ENCODE measurements at regions of chrX and their contacts with region 1.

Region 1: DNA sequence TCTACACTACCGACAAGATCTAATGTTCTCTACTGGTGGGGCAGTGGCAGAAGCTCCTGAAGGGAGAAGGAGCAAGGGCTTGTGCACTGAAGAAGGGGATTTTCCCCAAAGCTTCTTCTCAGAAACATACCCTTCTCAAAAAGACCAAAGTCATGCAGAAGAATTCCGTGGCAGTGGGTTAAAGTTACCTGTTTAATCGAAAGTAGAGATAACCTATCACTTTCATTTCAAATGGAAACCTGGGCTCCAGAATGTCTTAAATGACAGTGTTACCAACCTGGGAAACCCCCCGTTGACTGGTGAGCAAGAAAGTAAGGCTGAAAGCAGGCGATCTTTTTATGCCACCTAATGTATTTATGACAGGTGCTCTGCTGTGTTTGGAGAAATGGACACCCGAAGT is 92.5 kb upstream of the TEX13D start:
- DNase-seq: peak; percentile 34
- H3K4me3 Mint-ChIP-seq: peak overlapping the region; percentile 59
- H3K27ac Mint-ChIP-seq: peak overlapping the region; percentile 87
- H3K4me1 Mint-ChIP-seq: peaks cover 45% of the 10 kb centered on the region
- H3K27me3 Mint-ChIP-seq: peaks cover 4% of the 10 kb centered on the region

Region 2: GRCh38 chrX:124113799-124114600 is 125.9 kb before region 1 on chrX:
- intact Hi-C with region 1: no loop called
- DNase-seq: no peak
- H3K4me3 Mint-ChIP-seq: no peak overlapping the region
- H3K27ac Mint-ChIP-seq: no peak overlapping the region
- H3K4me1 Mint-ChIP-seq: no peaks in the 10 kb centered on the region
- H3K27me3 Mint-ChIP-seq: no peaks in the 10 kb centered on the region

Region 3: DNA sequence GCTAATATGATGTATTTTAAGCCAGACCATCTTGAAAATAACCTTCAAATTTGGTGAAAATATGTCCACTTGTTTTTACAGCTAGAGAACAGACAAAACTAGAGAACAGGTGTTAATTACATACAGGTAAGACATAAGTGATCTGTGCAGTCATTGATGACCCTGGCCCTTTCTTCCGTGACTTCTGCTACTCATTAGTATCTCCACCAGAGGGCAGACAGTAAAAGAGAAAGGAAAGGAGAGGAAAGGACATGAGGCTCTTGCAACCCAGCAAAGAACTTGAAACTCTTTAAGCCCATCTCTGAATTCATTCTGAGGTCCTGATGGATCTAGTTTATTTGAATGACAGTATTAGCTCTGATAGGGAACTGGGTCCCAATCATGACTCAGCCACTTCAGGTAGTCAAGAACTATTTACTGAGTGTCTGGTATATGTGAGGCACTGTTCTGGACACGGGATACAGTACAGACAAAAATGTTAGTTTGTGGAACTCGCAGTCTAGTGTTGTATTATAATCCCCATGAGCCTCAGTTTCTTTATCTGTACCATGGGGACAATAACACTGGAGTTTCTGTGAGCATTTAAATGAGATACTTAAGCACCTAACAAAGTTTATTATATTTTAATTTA is 28.5 kb before region 1 on chrX:
- intact Hi-C with region 1: loop called (anchors 1 kb)
- DNase-seq: peak; percentile 3
- H3K4me3 Mint-ChIP-seq: no peak overlapping the region
- H3K27ac Mint-ChIP-seq: no peak overlapping the region
- H3K4me1 Mint-ChIP-seq: peaks cover 44% of the 10 kb centered on the region
- H3K27me3 Mint-ChIP-seq: peaks cover 5% of the 10 kb centered on the region

Region 4: GRCh38 chrX:124217304-124218251 is 22.3 kb before region 1 on chrX:
- intact Hi-C with region 1: loop called (anchors 1 kb)
- DNase-seq: peak; percentile 56
- H3K4me3 Mint-ChIP-seq: peak overlapping the region; percentile 79
- H3K27ac Mint-ChIP-seq: peak overlapping the region; percentile 93
- H3K4me1 Mint-ChIP-seq: peaks cover 76% of the 10 kb centered on the region
- H3K27me3 Mint-ChIP-seq: peaks cover 2% of the 10 kb centered on the region

Region 5: DNA sequence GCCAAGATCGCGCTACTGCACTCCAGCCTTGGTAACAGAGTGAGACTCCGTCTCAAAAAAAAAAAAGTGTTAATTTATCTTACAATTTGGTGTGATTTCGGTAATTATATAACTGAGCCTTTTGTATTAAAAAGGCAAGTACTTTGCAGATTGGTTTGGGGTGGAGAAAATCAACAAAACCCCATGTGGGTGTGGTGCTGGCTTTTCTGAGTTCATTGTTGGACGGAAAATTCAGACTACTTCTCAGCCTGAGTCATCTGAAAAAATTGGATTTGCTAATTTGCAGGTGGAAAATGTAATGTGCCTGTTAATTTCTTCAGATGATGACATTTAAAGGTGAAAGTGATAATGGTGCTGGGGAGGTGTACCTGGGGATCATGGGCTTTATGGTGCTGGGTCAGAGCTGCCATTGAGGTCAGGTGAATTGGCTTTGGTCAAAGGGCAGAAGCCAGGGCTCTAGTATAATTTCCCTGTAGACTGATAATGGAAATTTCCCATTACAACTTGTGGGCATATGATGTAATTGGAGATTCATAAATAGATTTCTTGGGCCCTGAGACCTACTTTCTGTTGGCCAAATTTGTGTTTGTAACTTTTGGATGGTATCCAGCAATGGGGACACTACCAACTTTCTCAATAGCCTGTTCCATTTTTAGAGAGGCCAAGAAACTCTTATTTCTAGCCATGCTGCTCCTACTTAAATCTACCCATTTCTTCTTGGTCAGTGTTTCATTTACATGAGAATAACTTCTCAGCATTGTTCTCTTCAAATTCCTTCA is 18.2 kb after region 1 on chrX:
- intact Hi-C with region 1: loop called (anchors 1 kb)
- DNase-seq: no peak
- H3K4me3 Mint-ChIP-seq: no peak overlapping the region
- H3K27ac Mint-ChIP-seq: peak overlapping the region; percentile 27
- H3K4me1 Mint-ChIP-seq: peaks cover 13% of the 10 kb centered on the region
- H3K27me3 Mint-ChIP-seq: no peaks in the 10 kb centered on the region

Region 6: DNA sequence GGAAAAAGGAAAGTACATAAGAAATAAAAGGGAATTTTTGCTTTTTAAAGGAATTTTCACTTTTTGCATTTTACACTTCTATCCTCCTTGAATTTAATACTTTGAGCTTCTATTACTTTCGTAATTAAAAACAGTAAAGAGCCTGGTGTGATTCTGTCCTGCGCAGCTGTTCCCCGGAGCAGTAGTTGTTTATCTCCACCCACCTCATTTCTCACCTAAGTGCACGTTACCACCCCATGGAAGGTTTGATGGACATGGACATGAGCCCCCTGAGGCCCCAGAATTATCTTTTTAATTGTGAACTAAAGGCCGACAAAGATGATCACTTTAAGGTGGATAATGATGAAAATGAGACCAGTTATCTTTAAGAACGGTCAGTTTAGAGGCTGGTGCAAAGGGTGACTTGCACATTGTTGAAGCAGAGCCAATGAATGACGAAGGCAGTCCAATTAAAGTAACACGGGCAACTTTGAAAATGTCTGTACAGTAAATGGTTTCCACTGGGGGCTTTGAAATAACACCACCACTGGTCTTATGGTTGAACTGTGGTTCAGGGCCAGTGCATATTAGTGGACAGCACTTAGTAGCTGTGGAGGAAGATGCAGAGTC is 40.5 kb after region 1 on chrX:
- intact Hi-C with region 1: loop called (anchors 1 kb)
- DNase-seq: no peak
- H3K4me3 Mint-ChIP-seq: no peak overlapping the region
- H3K27ac Mint-ChIP-seq: peak overlapping the region; percentile 69
- H3K4me1 Mint-ChIP-seq: peaks cover 19% of the 10 kb centered on the region
- H3K27me3 Mint-ChIP-seq: no peaks in the 10 kb centered on the region

Region 7: DNA sequence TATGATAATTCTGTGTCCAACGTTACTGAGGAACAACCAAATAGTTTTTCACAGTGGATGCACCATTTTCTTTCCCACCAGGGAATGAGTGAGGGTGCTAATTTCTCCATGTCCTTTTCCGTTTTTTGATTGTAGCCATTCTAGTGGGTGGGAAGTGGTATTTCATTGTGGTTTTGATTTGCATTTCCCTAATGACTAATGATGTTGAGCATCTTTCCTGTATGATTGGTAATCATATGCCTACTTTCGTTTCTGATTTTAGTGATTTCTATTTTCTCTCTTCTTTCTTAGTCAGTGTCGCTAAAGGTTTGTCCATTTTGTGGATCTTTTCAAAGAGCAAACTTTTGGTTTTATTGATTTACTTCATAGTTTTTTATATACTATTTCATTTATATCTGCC is 60.5 kb after region 1 on chrX:
- intact Hi-C with region 1: loop called (anchors 1 kb)
- DNase-seq: no peak
- H3K4me3 Mint-ChIP-seq: peak overlapping the region; percentile 9
- H3K27ac Mint-ChIP-seq: peak overlapping the region; percentile 68
- H3K4me1 Mint-ChIP-seq: peaks cover 17% of the 10 kb centered on the region
- H3K27me3 Mint-ChIP-seq: no peaks in the 10 kb centered on the region

Region 8: DNA sequence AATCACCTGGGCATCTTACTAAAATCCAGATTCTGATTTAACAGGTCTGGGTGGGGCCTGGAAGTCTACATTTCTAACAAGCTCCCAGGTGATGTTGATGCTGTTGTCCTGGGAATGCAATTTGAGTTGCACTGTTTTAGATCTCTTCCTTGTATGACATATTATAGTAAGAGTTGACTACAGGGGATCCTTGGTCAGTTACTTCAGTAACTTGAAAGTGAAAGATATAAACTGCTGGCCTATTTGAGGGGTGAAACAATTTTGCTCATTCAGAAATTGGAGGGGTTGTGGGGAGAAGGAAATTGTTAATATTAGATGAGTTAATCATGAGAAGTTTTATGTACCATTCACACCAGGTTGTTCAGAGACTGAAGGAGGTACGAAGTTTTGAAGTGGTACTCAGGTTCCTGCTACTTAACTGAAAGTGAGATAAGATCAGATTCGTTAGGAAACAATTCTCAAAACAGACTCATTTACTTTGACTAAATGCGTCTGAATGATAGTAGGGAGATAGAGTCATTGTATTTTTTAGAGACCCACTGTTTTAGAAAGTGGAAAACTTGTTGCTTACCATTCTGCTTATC is 119.0 kb after region 1 on chrX:
- intact Hi-C with region 1: loop called (anchors 1 kb)
- DNase-seq: no peak
- H3K4me3 Mint-ChIP-seq: peak overlapping the region; percentile 72
- H3K27ac Mint-ChIP-seq: peak overlapping the region; percentile 90
- H3K4me1 Mint-ChIP-seq: peaks cover 60% of the 10 kb centered on the region
- H3K27me3 Mint-ChIP-seq: no peaks in the 10 kb centered on the region

Measured in activated T-helper 1 cell treated with anti-CD3 and anti-CD28 coated beads, Interleukin-12 subunit alpha, Interleukin-12 subunit beta, Interleukin-2, Interleukin-4 antibody, amounts not matched to agents 30 ng/mL and 10 ng/mL and 1 ng/mL, durations not matched to agents 14 hours and 24 hours and 36 hours (primary cell).